Activated CD8-positive, alpha-beta memory T cell treated with anti-CD3 and anti-CD28 coated beads, Interleukin-2, amount 10 ng/mL, durations not matched to agents 7 days and 5 days (primary cell): ENCODE measurements at regions of chr19 and their contacts with region 1.

Region 1: GRCh38 chr19:8342684-8343482 is at the start of gene KANK3:
- DNase-seq: peak; percentile 98
- ATAC-seq: peak; percentile 100
- H3K4me3 Mint-ChIP-seq: peak within 1 kb of the TSS; percentile 68
- H3K27ac Mint-ChIP-seq: no peak within 1 kb of the TSS
- H3K4me1 Mint-ChIP-seq: peaks cover 15% of the 10 kb centered on the region
- H3K27me3 Mint-ChIP-seq: peaks cover 21% of the 10 kb centered on the region
- total RNA-seq, gene KANK3: 3.2 to 3.7 TPM

Region 2: DNA sequence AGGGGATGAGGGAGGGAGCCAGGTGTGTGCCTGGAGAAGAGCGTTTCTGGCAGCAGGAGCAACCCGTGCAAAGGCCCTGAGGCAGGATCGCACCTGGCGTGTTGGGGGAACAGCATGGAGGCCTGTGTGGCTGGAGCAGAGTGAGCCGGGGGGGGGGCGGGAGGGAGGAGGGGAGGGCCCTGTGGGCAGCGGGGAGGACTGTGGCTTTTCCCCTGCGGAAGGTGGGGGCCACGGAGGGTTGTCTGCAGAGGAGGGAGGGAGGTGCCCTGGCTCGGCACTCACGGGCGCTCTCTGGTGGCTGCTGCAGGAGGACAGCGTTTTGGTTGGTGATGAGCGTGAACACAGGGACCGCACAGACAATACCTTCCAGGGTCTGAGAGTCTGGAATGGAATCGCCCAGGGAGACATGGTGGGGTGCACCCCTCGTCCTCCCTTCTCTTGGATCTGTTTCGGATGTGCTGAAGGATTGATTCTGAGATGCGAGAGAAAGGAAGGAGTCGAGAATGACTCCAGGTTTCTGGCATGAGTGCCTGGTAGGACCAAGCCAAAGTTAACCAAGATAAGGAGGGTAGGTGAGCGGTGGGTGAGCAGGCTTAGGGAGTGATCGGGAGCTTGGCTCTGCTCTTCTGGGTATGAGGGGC is 53.8 kb after region 1 on chr19:
- CTCF ChIA-PET with region 1: interaction called, 11 read pairs
- DNase-seq: peak; percentile 92
- ATAC-seq: peak; percentile 93
- H3K4me3 Mint-ChIP-seq: no peak overlapping the region
- H3K27ac Mint-ChIP-seq: peak overlapping the region; percentile 66
- H3K4me1 Mint-ChIP-seq: peaks cover 27% of the 10 kb centered on the region
- H3K27me3 Mint-ChIP-seq: no peaks in the 10 kb centered on the region